Activated CD4-positive, alpha-beta T cell treated with anti-CD3 and anti-CD28 coated beads, Interleukin-2, amount 10 ng/mL, durations not matched to agents 24 days and 14 days (primary cell): ENCODE measurements at regions of chr17 and their contacts with region 1.

Region 1: DNA sequence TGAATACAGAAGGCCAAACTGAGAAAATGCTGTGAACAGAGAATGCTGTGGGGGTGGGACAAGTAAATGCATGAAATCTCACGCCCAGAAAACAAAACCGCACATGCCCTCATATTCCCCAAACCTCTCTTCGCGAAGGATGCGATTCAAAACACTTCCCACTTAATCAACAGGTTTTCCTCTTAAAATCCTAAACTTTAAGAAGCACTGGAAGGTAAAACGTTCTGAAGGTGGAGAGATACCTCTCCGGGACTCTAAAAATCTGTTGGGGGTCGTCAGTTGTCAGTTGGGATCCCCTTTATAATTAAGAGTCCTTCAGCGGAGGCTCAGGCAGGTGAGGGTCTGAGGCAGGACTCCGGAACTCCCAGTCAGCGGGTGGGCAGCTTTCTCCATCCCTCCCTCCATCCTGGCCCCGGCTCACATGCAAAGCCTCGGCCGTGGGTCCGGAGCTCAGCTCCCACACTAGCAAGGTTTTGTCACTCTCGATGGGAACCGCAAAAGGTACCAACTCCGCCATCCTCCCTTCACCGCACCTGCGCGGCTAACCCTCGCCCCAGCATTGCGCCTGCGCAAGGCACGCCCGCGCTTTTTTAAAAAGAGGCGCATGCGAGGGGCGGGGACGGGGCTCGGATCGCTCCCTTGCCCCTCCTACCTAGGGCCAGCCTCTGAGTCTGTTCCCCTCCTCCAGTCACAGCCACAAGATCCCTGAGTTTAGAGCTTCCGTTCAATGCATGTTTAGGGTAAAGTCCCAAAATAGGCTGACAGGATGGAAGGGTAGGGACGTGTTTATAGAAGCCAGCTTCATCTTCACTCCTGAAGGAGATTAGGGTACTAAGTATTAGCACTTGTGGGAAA is at the start of gene RDM1:
- DNase-seq: peak; percentile 97
- H3K4me3 Mint-ChIP-seq: peak within 1 kb of the TSS; percentile 89
- H3K27ac Mint-ChIP-seq: peak within 1 kb of the TSS; percentile 91
- H3K4me1 Mint-ChIP-seq: peaks cover 23% of the 10 kb centered on the region
- H3K27me3 Mint-ChIP-seq: peaks cover 8% of the 10 kb centered on the region
- total RNA-seq, gene RDM1: 2.6 and 2.9 TPM in 2 replicates

Region 2: DNA sequence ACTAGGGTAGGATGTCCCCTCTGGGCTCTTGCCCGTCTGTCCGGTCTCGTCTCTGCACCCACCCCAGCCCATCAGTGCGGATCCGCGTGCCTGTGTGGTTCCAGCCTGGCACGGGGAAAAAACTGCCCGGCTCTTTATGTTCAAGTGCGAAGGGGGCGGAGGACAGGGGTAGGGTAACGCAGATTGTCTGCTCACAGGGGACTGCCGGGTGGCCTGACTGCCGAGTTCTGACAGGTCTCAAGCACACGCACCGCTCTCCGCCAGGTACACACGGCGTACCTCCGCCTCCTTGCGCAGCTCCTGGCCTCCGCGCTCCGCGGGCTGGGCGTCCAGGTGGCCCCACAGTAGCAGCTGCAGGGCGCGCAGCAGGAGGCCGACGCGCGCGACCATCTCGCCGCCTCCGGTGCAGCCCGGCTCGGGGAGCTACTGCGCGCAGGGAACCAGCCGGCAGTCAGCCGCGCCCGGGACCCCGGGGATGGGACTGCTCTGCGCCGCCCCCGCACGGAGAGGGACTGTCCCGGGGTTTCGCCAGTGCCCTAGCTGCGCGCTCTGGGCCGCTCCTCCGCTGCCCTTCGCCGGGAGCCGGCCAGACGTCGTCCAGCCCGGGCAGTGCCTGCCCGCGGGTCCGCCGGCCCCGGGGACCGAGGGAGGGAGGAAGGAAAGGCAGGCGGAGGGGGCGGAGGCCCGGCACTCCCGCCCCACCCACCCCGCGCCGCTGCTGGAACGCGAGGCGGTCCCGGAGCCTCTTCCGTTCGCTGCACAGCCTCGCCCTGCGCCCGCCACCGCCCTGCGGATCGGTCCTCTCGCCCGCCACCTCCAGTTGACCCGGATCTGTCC is 135.2 kb before region 1 on chr17 and contains the start of gene MMP28:
- intact Hi-C with region 1: no loop called
- DNase-seq: peak; percentile 81
- H3K4me3 Mint-ChIP-seq: peak within 1 kb of the TSS; percentile 82
- H3K27ac Mint-ChIP-seq: no peak within 1 kb of the TSS
- H3K4me1 Mint-ChIP-seq: peaks cover 12% of the 10 kb centered on the region
- H3K27me3 Mint-ChIP-seq: peaks cover 76% of the 10 kb centered on the region
- total RNA-seq, gene MMP28: not detected in 2 replicates

Region 3: DNA sequence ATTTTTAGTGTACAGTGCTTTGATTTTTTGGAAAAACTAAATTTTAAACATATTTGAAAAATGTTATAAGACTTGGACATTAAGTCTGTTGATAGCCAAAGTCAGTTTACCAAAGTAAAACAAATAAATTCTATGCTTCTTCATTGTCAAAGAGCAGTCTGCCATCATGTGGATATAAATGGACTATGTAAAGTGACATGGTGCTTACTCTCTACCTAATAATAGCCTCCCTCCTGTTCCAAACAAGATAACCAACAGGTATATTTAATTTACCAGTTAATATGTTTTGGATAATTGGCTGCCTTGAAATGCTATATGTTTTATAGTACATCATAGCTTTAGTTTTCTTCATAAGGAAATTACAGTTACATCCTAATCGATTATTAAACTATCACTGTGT is 105.2 kb before region 1 on chr17:
- intact Hi-C with region 1: no loop called
- DNase-seq: no peak
- H3K4me3 Mint-ChIP-seq: no peak overlapping the region
- H3K27ac Mint-ChIP-seq: no peak overlapping the region
- H3K4me1 Mint-ChIP-seq: peaks cover 6% of the 10 kb centered on the region
- H3K27me3 Mint-ChIP-seq: no peaks in the 10 kb centered on the region

Region 4: DNA sequence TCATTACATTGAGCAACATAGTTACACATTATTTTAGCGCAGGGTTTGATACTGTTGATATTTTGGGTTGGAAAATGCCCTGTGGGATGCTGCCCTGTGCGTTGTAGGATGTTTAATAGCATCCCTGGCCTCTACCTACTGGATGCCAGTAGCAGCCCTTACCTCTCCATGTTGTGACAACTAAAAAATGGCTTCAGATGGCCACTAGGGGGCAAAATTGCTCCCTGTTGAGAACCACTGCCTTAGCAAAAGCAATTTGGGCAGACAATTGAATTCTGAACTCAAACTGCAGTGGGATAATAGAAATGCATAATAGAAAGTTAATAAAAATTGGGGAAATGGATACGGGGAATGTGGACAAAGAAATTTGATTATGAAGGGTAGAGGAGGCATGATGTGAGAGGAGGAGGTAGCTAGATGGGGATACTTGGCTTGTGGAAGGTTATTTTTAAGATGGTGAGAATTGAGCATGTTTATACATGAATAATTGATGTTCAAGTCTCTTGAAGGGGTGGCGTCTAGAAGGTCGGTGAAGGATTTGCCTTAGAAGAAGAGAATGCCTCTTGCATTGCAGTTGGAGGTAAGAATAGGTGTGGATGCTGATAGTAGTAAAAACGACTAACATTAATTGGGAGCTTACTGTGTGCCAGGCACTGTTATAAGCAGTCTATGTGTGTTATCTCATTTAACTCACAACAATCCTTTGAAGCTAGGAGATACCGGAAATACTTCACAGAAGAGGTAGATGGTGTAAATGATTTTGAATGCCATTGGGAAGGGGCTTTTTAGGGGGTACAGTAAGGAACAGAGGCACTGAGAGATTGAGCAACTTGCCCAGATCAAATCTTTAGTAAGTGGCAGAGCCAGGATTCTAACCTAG is 80.7 kb before region 1 on chr17:
- intact Hi-C with region 1: loop called (anchors 2 kb)
- DNase-seq: peak; percentile 89
- H3K4me3 Mint-ChIP-seq: no peak overlapping the region
- H3K27ac Mint-ChIP-seq: no peak overlapping the region
- H3K4me1 Mint-ChIP-seq: peaks cover 10% of the 10 kb centered on the region
- H3K27me3 Mint-ChIP-seq: no peaks in the 10 kb centered on the region

Region 5: GRCh38 chr17:35889818-35890763 is 40.3 kb before region 1 on chr17:
- intact Hi-C with region 1: loop called (anchors 2 kb)
- DNase-seq: peak; percentile 69
- H3K4me3 Mint-ChIP-seq: peak overlapping the region; percentile 44
- H3K27ac Mint-ChIP-seq: peak overlapping the region; percentile 77
- H3K4me1 Mint-ChIP-seq: peaks cover 47% of the 10 kb centered on the region
- H3K27me3 Mint-ChIP-seq: no peaks in the 10 kb centered on the region